ENCODE measurements at regions of chr6 and their contacts with region 1.

Region 1: DNA sequence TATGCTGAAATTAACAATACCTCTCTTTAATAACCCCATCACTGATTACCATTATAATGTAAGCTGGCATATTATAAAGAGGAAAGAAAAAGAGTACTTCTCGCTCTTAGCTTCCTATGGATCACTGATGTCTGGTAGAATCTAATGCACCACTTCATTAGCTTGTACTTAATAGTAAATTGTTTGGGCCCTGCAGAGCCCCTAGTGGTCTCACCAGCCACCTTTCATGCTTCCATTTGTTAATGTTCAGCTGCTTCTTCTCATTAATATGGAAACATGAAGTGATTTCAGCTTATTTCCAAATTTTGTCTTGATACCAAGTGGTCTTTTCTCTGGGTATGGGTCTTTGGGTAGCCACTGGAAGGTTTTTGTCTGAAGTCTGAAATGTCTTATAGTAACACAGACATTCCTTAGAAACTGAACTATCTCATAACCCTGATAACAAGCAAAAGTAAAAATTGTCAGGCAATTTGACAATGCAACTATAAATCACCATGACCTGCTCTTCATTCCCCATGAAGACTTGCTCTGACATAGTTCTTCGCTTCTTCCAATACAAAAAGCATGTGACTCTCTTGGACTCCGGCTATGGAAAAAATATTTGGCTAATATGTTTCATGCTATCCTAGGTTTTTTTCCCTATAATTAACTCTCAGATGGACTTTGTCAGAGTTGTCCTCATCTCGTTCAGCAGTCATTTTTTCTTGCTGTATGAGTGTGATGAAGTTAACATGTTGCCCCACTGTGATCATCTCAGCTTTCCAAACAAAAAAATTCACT is 395.8 kb upstream of the MARCKS start:
- DNase-seq: no peak
- H3K4me3 ChIP-seq: no peak overlapping the region
- H3K27ac ChIP-seq: no peak overlapping the region
- H3K4me1 ChIP-seq: no peaks in the 10 kb centered on the region
- H3K27me3 ChIP-seq: no peaks in the 10 kb centered on the region
- CTCF ChIP-seq: peak in 2 of 3 experiments; percentile 17 to 46; a peak in 2 of 4 replicates
- EP300 ChIP-seq: no peak
- POLR2A ChIP-seq: no peak
- RAD21 ChIP-seq: peak; percentile 33 to 34; a peak in 3 of 4 replicates

Region 2: GRCh38 chr6:113381232-113381631 is 80.1 kb before region 1 on chr6:
- CTCF ChIA-PET with region 1: no interaction called
- POLR2A ChIA-PET with region 1: no interaction called
- DNase-seq: no peak
- H3K4me3 ChIP-seq: no peak overlapping the region
- H3K27ac ChIP-seq: no peak overlapping the region
- H3K4me1 ChIP-seq: no peaks in the 10 kb centered on the region
- H3K27me3 ChIP-seq: no peaks in the 10 kb centered on the region
- CTCF ChIP-seq: no peak
- EP300 ChIP-seq: no peak
- POLR2A ChIP-seq: no peak
- RAD21 ChIP-seq: no peak

Region 3: DNA sequence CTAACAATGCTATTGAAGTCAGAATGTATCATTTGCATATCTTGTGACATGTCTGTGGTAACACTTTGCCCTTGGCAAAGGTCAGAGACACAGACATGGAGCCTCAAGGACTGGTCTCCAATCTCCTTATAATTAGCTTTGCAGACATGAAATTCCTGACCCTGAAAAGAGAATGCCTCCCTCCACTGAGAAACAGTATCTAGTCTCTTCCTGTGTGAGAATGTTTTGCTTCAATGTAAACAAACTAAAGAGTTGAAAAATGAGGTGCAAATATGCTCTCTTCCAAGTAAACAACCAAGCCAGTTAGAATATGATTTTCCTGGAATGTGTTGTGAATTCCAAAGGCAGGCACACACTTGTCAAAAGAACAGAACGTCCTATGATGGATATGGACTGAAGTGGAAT is 11.3 kb before region 1 on chr6:
- CTCF ChIA-PET with region 1: interaction called, 15 read pairs
- POLR2A ChIA-PET with region 1: no interaction called
- DNase-seq: no peak
- H3K4me3 ChIP-seq: no peak overlapping the region
- H3K27ac ChIP-seq: no peak overlapping the region
- H3K4me1 ChIP-seq: no peaks in the 10 kb centered on the region
- H3K27me3 ChIP-seq: no peaks in the 10 kb centered on the region
- CTCF ChIP-seq: no peak
- EP300 ChIP-seq: no peak
- POLR2A ChIP-seq: no peak
- RAD21 ChIP-seq: no peak

Region 4: GRCh38 chr6:113732384-113732966 is 271.1 kb after region 1 on chr6:
- CTCF ChIA-PET with region 1: no interaction called
- POLR2A ChIA-PET with region 1: no interaction called
- DNase-seq: peak in 1 of 2 experiments; percentile 28
- H3K4me3 ChIP-seq: no peak overlapping the region
- H3K27ac ChIP-seq: no peak overlapping the region
- H3K4me1 ChIP-seq: 0 out of 7 replicates have a peak, but pooled peaks cover 0 to 2% (median 0%) of the 10 kb centered on the region in 4 experiments
- H3K27me3 ChIP-seq: no peaks in the 10 kb centered on the region
- CTCF ChIP-seq: no peak
- EP300 ChIP-seq: no peak
- POLR2A ChIP-seq: no peak
- RAD21 ChIP-seq: 0 out of 4 replicates have a peak, but pooled peaks of 1 of the 2 experiments have one; percentile 2

Measured in H1 (cell line).